ENCODE measurements at regions of chr4 and their contacts with region 1.

Region 1: DNA sequence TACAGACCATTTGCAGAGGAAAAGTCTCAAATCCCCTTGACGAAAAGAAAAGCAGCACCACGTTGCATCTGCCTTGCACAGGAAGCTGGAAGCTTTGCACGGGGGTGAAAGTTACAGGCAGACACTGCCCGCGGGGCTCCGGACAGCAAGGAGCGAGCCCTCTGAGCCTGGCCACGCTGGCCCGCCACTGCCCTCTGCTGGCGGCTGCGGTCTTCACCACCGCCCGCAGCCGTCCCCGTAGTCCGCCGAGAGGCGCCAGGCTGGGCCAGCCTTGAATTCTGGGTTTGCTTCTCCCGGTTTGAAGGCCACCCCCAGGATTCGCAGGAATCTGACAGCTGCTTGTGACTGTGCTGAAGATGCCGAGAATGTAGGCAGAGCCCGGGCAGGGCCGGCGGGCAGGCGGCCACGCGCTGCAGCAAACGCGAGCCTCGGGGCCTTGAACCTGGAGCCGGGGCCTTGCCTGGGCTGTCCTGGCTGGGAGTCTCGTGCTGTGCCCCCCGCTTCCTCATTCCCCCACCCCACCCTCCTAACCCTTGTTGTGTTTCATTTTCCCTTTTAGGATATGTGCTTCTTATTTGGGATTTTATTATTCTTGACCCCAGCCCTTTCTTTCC is 49.2 kb downstream of the ENPP6 start:
- DNase-seq: peak; percentile 28
- H3K4me3 ChIP-seq: no peak overlapping the region
- H3K27ac ChIP-seq: no peak overlapping the region
- H3K4me1 ChIP-seq: no peaks in the 10 kb centered on the region
- H3K27me3 ChIP-seq: peaks cover 3% of the 10 kb centered on the region
- CTCF ChIP-seq: peak; percentile 77 to 97

Region 2: DNA sequence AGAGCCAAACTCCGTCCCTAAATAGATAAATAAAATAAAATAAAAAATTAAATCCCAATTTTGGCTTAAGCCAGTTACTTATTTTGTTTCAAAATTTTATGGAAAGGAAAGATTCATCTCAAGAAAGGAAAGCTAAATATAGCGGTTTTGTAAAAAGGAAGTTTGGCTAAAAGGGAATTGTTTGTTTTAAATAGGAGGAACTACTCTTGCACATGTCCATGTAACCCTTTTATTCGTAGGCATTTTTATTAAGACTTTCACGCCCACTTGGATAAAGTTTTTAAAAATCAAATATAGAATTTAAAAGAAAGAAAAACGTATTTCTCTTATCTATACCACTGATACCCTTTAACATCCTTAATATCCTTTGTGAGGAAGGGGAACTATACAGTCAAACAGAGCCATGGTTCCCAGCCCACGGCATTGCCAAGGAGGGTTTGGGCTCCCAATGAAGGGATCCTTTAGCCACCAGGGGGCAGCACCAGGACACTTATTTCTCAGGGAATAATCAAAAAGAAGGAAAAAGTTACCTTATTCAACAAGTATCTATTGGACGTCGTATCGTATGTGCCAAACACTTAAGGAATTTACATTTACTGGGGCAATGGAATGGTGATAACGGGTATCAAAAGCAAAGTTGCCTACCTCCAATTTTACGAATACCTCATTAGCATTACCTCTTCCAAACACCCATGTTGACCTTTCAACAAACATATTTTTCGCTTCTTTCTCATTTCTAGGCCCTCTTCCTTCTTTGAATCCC is 696.4 kb before region 1 on chr4:
- CTCF ChIA-PET with region 1: no interaction called
- dilution Hi-C with region 1: no loop called
- in situ Hi-C with region 1: loop called in 1 of 2 experiments (anchors 25 kb)
- intact Hi-C with region 1: loop called (anchors 5 kb)
- DNase-seq: peak; percentile 50
- H3K4me3 ChIP-seq: no peak overlapping the region
- H3K27ac ChIP-seq: no peak overlapping the region
- H3K4me1 ChIP-seq: peaks cover 33% of the 10 kb centered on the region
- H3K27me3 ChIP-seq: no peaks in the 10 kb centered on the region
- CTCF ChIP-seq: peak; percentile 73 to 85

Region 3: GRCh38 chr4:183716302-183716701 is 452.2 kb before region 1 on chr4:
- CTCF ChIA-PET with region 1: no interaction called
- dilution Hi-C with region 1: no loop called
- in situ Hi-C with region 1: no loop called
- intact Hi-C with region 1: loop called (anchors 5 kb)
- DNase-seq: no peak
- H3K4me3 ChIP-seq: no peak overlapping the region
- H3K27ac ChIP-seq: no peak overlapping the region
- H3K4me1 ChIP-seq: no peaks in the 10 kb centered on the region
- H3K27me3 ChIP-seq: no peaks in the 10 kb centered on the region
- CTCF ChIP-seq: no peak

Region 4: DNA sequence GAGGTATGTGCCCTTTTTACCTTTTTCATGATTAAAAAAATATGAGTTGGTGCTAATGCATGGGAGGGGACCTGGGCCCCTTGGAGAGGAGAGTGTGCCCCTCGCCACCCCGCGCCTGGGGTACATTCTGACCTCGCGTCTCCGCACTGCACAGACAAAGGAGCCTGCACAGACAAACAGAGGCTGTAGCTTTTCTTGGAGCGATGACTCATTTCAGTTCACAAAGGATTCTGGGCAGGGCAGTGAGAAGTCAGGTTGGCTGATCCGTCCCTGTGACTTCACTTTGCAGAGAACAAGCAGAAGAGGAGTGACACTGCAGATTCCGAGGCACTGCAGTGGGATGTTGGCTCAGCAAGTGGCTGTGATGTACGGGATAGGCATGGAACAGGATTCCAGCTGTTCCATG is 180.5 kb before region 1 on chr4:
- CTCF ChIA-PET with region 1: no interaction called
- dilution Hi-C with region 1: no loop called
- in situ Hi-C with region 1: no loop called
- intact Hi-C with region 1: loop called (anchors 5 kb)
- DNase-seq: peak; percentile 86
- H3K4me3 ChIP-seq: peak overlapping the region; percentile 31 to 44 (median 38)
- H3K27ac ChIP-seq: peak overlapping the region; percentile 90
- H3K4me1 ChIP-seq: peaks cover 18% of the 10 kb centered on the region
- H3K27me3 ChIP-seq: no peaks in the 10 kb centered on the region
- CTCF ChIP-seq: no peak

Region 5: DNA sequence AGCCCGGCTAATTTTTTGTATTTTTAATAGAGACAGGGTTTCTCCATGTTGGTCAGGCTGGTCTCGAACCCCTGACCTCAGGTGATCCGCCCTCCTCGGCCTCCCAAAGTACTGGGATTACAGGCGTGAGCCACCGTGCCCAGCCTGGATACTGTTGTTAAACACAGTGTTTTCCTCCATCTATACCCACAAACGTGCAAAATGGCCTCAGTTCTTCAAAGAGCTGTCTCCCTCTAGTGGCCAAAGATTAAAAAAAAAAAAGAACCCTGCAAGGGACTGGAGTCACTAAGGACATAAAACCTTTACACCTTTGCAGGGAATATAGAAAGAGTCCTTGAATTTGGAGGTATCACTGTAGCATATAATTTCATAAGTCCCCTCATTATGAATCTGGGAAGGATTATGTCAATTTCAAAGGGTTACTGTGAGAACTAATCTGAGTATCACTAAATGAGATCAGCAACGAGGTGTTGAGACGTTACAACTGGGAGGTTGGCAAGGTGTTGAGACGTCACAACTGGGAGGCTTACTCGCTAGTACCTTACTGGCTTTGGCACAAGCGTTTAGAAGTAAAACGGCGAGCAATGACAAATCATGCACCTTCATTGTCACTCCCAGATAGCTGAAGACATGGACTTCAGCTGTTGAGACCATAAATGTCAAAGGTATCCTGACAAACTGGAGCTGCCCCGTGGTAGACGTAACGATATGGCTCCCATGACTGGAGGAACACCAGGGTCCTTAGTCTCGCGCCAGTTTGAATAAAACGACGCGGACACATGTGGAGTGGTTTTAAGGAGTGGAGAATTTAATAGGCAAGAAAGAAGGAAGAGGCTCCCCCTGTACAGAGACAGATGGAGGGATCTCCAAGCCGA is 82.5 kb after region 1 on chr4:
- CTCF ChIA-PET with region 1: no interaction called
- dilution Hi-C with region 1: no loop called
- in situ Hi-C with region 1: no loop called
- intact Hi-C with region 1: loop called (anchors 1 kb)
- DNase-seq: peak; percentile 47
- H3K4me3 ChIP-seq: no peak overlapping the region
- H3K27ac ChIP-seq: no peak overlapping the region
- H3K4me1 ChIP-seq: no peaks in the 10 kb centered on the region
- H3K27me3 ChIP-seq: no peaks in the 10 kb centered on the region
- CTCF ChIP-seq: peak; percentile 49 to 64

Measured in mammary epithelial cell (primary cell).